ENCODE measurements at regions of chr10 and their contacts with region 1.

Region 1: GRCh38 chr10:59060852-59061251 is 115.6 kb upstream of the PHYHIPL start:
- DNase-seq: no peak
- ATAC-seq: no peak
- H3K4me3 ChIP-seq: no peak overlapping the region
- H3K27ac ChIP-seq: no peak overlapping the region
- H3K4me1 ChIP-seq: peaks cover 10 to 23% (median 21%) of the 10 kb centered on the region in 3 donors
- H3K27me3 ChIP-seq: no peaks in the 10 kb centered on the region
- CTCF ChIP-seq: no peak

Region 2: GRCh38 chr10:58967551-58968388 is 93.1 kb before region 1 on chr10:
- intact Hi-C with region 1: loop called in 1 of 3 experiments (anchors 10 kb)
- DNase-seq: peak; percentile 42 to 83 (median 65)
- ATAC-seq: peak; percentile 85 to 96 (median 94)
- H3K4me3 ChIP-seq: peak overlapping the region in 2 of 4 donors; percentile 11 to 28
- H3K27ac ChIP-seq: peak overlapping the region in 2 of 4 donors; percentile 5 to 27
- H3K4me1 ChIP-seq: peaks cover 0 to 12% (median 4%) of the 10 kb centered on the region in 3 donors
- H3K27me3 ChIP-seq: no peaks in the 10 kb centered on the region
- CTCF ChIP-seq: no peak

Region 3: GRCh38 chr10:59019603-59020002 is 41.2 kb before region 1 on chr10:
- intact Hi-C with region 1: loop called in 1 of 3 experiments (anchors 10 kb)
- DNase-seq: no peak
- ATAC-seq: peak in 3 of 4 donors; percentile 53 to 65 (median 56)
- H3K4me3 ChIP-seq: no peak overlapping the region
- H3K27ac ChIP-seq: no peak overlapping the region
- H3K4me1 ChIP-seq: peaks cover 0 to 8% (median 7%) of the 10 kb centered on the region in 3 donors
- H3K27me3 ChIP-seq: no peaks in the 10 kb centered on the region
- CTCF ChIP-seq: no peak

Region 4: GRCh38 chr10:59354434-59354833 is 293.6 kb after region 1 on chr10:
- intact Hi-C with region 1: no loop called
- DNase-seq: no peak
- ATAC-seq: no peak
- H3K4me3 ChIP-seq: no peak overlapping the region
- H3K27ac ChIP-seq: no peak overlapping the region
- H3K4me1 ChIP-seq: no peaks in the 10 kb centered on the region
- H3K27me3 ChIP-seq: no peaks in the 10 kb centered on the region
- CTCF ChIP-seq: no peak

Measured in pancreas (tissue), 10 donors.